HepG2 (cell line): ENCODE measurements at regions of chr3 and their contacts with region 1.

Region 1: DNA sequence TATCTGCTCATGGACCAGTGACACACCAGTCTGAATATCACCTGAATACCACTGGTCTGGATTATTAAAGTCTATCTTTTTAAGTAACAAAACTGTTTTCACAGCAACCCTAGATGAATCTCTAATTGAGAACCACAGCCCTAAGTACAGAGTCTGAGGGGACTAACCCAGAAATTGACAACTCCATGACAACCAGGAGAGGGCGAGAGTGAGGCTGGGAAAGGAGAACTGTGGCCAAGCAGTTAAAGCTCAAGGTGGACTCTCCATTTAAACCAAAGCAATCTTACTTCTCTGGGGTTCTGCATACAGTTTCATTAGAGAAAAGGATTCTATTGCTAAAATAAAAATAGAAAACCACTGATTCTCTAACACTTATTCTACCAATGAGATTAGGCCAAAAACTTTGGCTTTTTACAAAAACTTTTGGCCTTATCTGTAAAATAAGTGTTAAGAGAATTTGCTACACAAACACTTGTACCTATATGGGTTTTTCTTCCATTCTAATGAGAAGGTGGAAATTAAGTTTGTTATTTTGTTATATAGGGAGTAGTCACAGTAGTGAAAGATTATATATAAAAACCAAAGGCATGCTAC is 11.4 kb downstream of the NEK10 start:
- DNase-seq: peak; percentile 74
- ATAC-seq: peak; percentile 51
- H3K4me3 ChIP-seq: no peak overlapping the region
- H3K27ac ChIP-seq: peak overlapping the region; percentile 99
- H3K4me1 ChIP-seq: peaks cover 74% of the 10 kb centered on the region
- H3K27me3 ChIP-seq: no peaks in the 10 kb centered on the region
- CTCF ChIP-seq: peak; percentile 75
- EP300 ChIP-seq: no peak
- POLR2A ChIP-seq: no peak
- RAD21 ChIP-seq: peak; percentile 70

Region 2: DNA sequence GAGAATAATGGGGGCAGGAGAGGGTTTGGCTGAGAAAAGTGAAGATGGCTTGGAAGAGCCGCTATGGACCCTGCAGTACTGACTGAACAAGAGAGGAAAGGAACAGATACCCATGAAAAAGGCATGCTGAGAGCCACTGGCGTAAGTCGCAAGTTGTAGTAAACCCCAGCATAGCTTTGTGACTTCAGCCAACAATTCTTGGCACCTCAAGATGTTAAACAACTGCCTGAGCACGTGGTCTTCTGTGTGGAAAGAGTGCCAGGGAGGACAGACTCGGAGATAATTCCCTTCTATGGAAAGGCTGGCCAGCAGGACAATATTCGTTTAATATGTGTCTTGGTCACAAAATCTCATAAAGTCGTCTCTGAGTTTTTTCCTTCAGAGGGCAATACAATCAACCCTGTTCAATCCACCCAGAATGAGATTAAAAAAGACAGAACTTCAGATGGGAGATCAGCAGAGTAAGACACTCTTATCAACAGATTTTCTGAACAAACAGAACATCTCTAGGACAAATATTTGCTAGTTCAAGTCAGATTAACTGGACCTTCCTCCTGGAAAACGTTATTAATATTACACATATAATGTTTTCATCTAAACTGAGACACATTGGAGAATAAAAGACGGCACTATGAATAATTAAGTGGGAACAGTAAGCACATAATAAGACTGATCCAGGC is 37.8 kb before region 1 on chr3:
- CTCF ChIA-PET with region 1: no interaction called
- POLR2A ChIA-PET with region 1: no interaction called
- in situ Hi-C with region 1: no loop called
- intact Hi-C with region 1: loop called (anchors 5 kb)
- DNase-seq: no peak
- ATAC-seq: no peak
- H3K4me3 ChIP-seq: no peak overlapping the region
- H3K27ac ChIP-seq: no peak overlapping the region
- H3K4me1 ChIP-seq: peaks cover 48% of the 10 kb centered on the region
- H3K27me3 ChIP-seq: no peaks in the 10 kb centered on the region
- CTCF ChIP-seq: no peak
- EP300 ChIP-seq: no peak
- POLR2A ChIP-seq: no peak
- RAD21 ChIP-seq: no peak

Region 3: DNA sequence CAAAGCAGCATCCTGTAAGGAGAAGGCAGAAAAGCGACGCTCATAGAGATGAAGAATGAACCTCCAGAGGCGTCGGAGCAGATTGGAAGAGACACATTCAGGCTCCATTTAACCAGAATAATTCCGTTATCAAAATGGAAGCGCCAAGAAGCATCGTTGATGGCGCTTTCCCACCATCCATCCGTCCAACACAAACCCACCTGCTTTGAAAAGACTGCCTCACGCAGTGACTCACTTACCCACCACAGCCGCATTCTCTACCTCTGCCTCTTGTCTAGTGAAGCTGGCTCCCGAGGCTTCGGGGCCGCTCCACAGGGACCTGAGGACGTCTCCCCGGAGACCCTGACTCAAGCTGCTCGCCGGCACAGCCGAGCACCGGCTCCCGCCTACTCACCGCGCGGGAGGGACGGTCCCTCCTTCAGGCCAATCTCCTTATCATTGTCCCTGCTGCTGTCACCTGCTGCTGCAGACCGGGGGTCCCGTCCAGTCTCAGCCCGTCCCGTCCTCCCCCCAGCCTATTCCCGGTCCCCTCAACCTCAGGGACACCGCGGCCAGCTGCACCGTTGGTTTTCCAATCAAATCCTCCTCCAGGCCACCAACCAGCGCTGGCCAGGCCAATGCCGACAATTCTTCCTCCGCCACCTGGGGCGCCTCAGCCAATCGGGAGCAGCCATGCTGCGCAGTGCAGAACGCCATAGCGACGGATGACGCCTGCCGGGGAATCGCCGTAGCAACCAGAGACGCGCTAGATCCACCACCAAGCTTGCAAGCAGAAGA is 11.3 kb after region 1 on chr3 and contains the start of gene NEK10:
- CTCF ChIA-PET with region 1: no interaction called
- POLR2A ChIA-PET with region 1: interaction called, 11 read pairs
- in situ Hi-C with region 1: no loop called
- intact Hi-C with region 1: no loop called
- DNase-seq: peak; percentile 88
- ATAC-seq: peak; percentile 96
- H3K4me3 ChIP-seq: peak within 1 kb of the TSS; percentile 89 to 94 (median 90)
- H3K27ac ChIP-seq: peak within 1 kb of the TSS; percentile 40
- H3K4me1 ChIP-seq: peaks cover 53% of the 10 kb centered on the region
- H3K27me3 ChIP-seq: no peaks in the 10 kb centered on the region
- CTCF ChIP-seq: no peak; the same call in 1 of the 2 replicates
- EP300 ChIP-seq: no peak
- POLR2A ChIP-seq: 0 out of 4 replicates have a peak, but pooled peaks of 1 of the 2 experiments have one; percentile 30
- RAD21 ChIP-seq: no peak
- total RNA-seq, gene NEK10: 14.2 and 15.0 TPM in 2 replicates

Region 4: DNA sequence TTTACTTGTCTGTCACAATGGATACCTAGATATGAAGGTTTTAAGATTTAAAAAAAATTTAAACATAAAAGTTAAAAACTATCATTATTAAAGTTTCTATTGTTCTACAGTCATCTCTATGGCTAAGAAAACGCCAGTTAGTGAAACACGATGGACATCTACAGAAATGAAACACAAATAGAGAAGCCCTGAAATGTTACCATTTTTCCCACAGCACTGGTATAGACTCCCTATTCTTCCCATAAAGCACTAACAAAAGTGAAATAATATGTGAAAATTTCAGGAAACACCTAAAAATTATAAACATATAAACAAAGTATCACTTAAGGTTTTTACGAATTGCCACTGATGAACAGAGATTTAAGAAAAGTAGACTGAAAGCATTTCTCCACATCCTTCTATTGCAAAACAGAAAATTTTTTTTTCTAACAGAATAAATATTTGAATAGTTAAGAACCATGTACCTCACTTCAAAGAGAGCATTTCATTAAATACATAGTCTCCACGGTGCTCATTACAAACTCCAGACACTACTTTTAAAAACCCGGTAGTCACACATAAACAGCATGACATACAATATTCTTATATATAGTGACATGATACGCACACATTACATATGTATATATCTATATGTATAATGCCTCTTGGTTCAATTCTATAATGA is 18.5 kb after region 1 on chr3:
- CTCF ChIA-PET with region 1: no interaction called
- POLR2A ChIA-PET with region 1: interaction called, 3 read pairs
- in situ Hi-C with region 1: no loop called
- intact Hi-C with region 1: loop called (anchors 1 kb)
- DNase-seq: peak; percentile 84
- ATAC-seq: peak; percentile 98
- H3K4me3 ChIP-seq: peak overlapping the region in 2 of 3 experiments; percentile 13 to 21; a peak in 2 of 6 replicates
- H3K27ac ChIP-seq: peak overlapping the region; percentile 78
- H3K4me1 ChIP-seq: peaks cover 47% of the 10 kb centered on the region
- H3K27me3 ChIP-seq: no peaks in the 10 kb centered on the region
- CTCF ChIP-seq: no peak
- EP300 ChIP-seq: peak; percentile 51 to 92; a peak in 3 of 4 replicates
- POLR2A ChIP-seq: no peak
- RAD21 ChIP-seq: no peak

Region 5: GRCh38 chr3:27467545-27467944 is 109.8 kb after region 1 on chr3:
- CTCF ChIA-PET with region 1: interaction called, 9 read pairs
- POLR2A ChIA-PET with region 1: interaction called, 3 read pairs
- in situ Hi-C with region 1: no loop called
- intact Hi-C with region 1: loop called (anchors 1 kb)
- DNase-seq: peak; percentile 28
- ATAC-seq: peak; percentile 63
- H3K4me3 ChIP-seq: no peak overlapping the region
- H3K27ac ChIP-seq: no peak overlapping the region
- H3K4me1 ChIP-seq: no peaks in the 10 kb centered on the region
- H3K27me3 ChIP-seq: no peaks in the 10 kb centered on the region
- CTCF ChIP-seq: peak; percentile 60
- EP300 ChIP-seq: no peak
- POLR2A ChIP-seq: no peak
- RAD21 ChIP-seq: 0 out of 2 replicates have a peak, but pooled peaks have one; percentile 30

Region 6: GRCh38 chr3:27681245-27681748 is 323.5 kb after region 1 on chr3:
- CTCF ChIA-PET with region 1: no interaction called
- POLR2A ChIA-PET with region 1: interaction called, 5 read pairs
- in situ Hi-C with region 1: no loop called
- intact Hi-C with region 1: loop called (anchors 1 kb)
- DNase-seq: peak; percentile 74
- ATAC-seq: peak; percentile 69
- H3K4me3 ChIP-seq: peak overlapping the region; percentile 48 to 62 (median 51); a peak in 4 of 6 replicates
- H3K27ac ChIP-seq: peak overlapping the region; percentile 60
- H3K4me1 ChIP-seq: peaks cover 37% of the 10 kb centered on the region
- H3K27me3 ChIP-seq: no peaks in the 10 kb centered on the region
- CTCF ChIP-seq: peak; percentile 69
- EP300 ChIP-seq: no peak
- POLR2A ChIP-seq: no peak
- RAD21 ChIP-seq: peak; percentile 31; the same call in 1 of the 2 replicates

Region 7: GRCh38 chr3:28348629-28349483 is 991.1 kb after region 1 on chr3 and contains the starts of genes AZI2 and ZCWPW2:
- CTCF ChIA-PET with region 1: no interaction called
- POLR2A ChIA-PET with region 1: no interaction called
- in situ Hi-C with region 1: no loop called
- intact Hi-C with region 1: loop called (anchors 5 kb)
- DNase-seq: peak; percentile 89
- ATAC-seq: peak; percentile 91
- H3K4me3 ChIP-seq: peak within 1 kb of the TSS; percentile 76 to 94 (median 93)
- H3K27ac ChIP-seq: peak within 1 kb of the TSS; percentile 96
- H3K4me1 ChIP-seq: peaks cover 36% of the 10 kb centered on the region
- H3K27me3 ChIP-seq: no peaks in the 10 kb centered on the region
- CTCF ChIP-seq: peak; percentile 61
- EP300 ChIP-seq: no peak
- POLR2A ChIP-seq: peak; percentile 73 to 75
- RAD21 ChIP-seq: no peak; the same call in 1 of the 2 replicates
- total RNA-seq, gene AZI2: 43.7 and 48.4 TPM in 2 replicates
- total RNA-seq, gene ZCWPW2: 0.46 and 0.53 TPM in 2 replicates